Endothelial cell of umbilical vein (primary cell): ENCODE measurements at regions of chr3 and their contacts with region 1.

Region 1: DNA sequence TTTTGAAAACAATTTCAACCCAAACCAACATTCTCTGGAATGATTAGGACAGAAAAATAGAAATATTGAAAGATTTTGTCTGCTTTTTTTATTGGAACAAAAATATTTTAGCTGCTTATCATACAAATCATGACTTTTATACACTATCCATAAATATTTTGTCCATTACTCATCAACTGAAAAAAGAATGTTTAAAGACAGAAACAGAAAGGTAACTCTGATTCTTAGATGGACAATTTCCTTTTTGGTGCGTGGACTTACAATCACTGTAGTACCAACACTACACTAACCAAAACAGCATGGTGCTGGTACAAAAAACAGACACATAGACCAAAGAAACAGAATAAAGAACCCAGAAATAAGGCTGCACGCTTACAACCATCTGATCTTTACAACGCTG is 582.8 kb upstream of the CCDC54 start:
- DNase-seq: no peak
- H3K4me3 ChIP-seq: no peak overlapping the region
- H3K27ac ChIP-seq: no peak overlapping the region
- H3K4me1 ChIP-seq: no peaks in the 10 kb centered on the region
- H3K27me3 ChIP-seq: no peaks in the 10 kb centered on the region
- CTCF ChIP-seq: no peak
- POLR2A ChIP-seq: no peak

Region 2: GRCh38 chr3:106167728-106168127 is 626.7 kb before region 1 on chr3:
- CTCF ChIA-PET with region 1: no interaction called
- POLR2A ChIA-PET with region 1: interaction called, 12 read pairs
- dilution Hi-C with region 1: no loop called
- intact Hi-C with region 1: no loop called
- DNase-seq: no peak
- H3K4me3 ChIP-seq: no peak overlapping the region
- H3K27ac ChIP-seq: no peak overlapping the region
- H3K4me1 ChIP-seq: no peaks in the 10 kb centered on the region
- H3K27me3 ChIP-seq: no peaks in the 10 kb centered on the region
- CTCF ChIP-seq: no peak
- POLR2A ChIP-seq: no peak

Region 3: DNA sequence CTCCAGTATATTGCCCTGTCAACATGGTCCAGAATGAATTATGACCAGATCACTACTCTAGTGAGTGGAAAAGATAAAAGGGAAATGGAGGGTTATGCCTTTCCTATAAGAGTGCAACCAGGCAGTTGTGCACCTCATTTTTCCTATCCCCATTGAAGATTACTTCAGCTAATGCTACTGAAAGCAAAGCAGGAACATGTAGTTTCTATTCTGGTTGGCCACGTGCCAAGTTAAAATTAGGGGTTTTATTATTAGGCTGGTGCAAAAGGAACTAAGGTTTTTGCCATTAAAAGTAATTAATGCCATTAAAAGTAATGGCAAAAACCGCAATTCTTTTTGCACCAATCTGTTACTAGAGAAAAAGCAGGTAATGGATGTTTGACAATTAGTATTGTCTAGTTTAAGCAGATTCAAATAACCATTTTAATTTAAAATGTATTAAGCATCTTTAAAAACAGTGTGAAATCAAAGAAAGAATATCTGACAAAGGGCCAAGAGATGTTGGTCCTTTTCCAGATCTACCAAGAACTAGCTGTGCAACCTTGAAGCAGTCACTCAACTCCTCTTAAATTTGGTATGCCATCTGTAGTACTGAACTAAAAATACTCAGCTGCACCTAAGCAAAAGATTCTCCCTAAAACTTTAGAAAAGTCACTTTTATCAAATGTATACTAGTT is 15.3 kb after region 1 on chr3:
- CTCF ChIA-PET with region 1: no interaction called
- POLR2A ChIA-PET with region 1: no interaction called
- dilution Hi-C with region 1: no loop called
- intact Hi-C with region 1: no loop called
- DNase-seq: peak; percentile 31
- H3K4me3 ChIP-seq: no peak overlapping the region
- H3K27ac ChIP-seq: no peak overlapping the region
- H3K4me1 ChIP-seq: peaks cover 12% of the 10 kb centered on the region
- H3K27me3 ChIP-seq: no peaks in the 10 kb centered on the region
- CTCF ChIP-seq: no peak
- POLR2A ChIP-seq: no peak